BJ (cell line): ENCODE measurements at regions of chr4 and their contacts with region 1.

Region 1: GRCh38 chr4:78962597-78963115 is 23.4 kb upstream of the PAQR3 start:
- DNase-seq: no peak
- H3K4me3 ChIP-seq: no peak overlapping the region
- H3K27me3 ChIP-seq: no peaks in the 10 kb centered on the region
- CTCF ChIP-seq: no peak

Region 2: GRCh38 chr4:78899302-78899701 is 63.4 kb before region 1 on chr4:
- CTCF ChIA-PET with region 1: no interaction called
- POLR2A ChIA-PET with region 1: no interaction called
- DNase-seq: no peak
- H3K4me3 ChIP-seq: no peak overlapping the region
- H3K27me3 ChIP-seq: no peaks in the 10 kb centered on the region
- CTCF ChIP-seq: no peak

Region 3: GRCh38 chr4:78951862-78952472 is 10.7 kb before region 1 on chr4:
- CTCF ChIA-PET with region 1: interaction called, 17 read pairs
- POLR2A ChIA-PET with region 1: no interaction called
- DNase-seq: no peak
- H3K4me3 ChIP-seq: no peak overlapping the region
- H3K27me3 ChIP-seq: peaks cover 7% of the 10 kb centered on the region; the same call in 1 of the 2 replicates
- CTCF ChIP-seq: peak; percentile 73